H1 (cell line): ENCODE measurements at regions of chr22 and their contacts with region 1.

Region 1: GRCh38 chr22:45263463-45264269 is 21.1 kb upstream of the UPK3A start:
- DNase-seq: peak in 1 of 2 experiments; percentile 76
- H3K4me3 ChIP-seq: no peak overlapping the region
- H3K27ac ChIP-seq: no peak overlapping the region
- H3K4me1 ChIP-seq: peaks cover 0 to 4% (median under 1%) of the 10 kb centered on the region in 4 experiments; a peak in 2 of 7 replicates
- H3K27me3 ChIP-seq: peaks cover 0 to 12% (median 7%) of the 10 kb centered on the region in 4 experiments; a peak in 4 of 7 replicates
- CTCF ChIP-seq: peak; percentile 76 to 95 (median 87)
- EP300 ChIP-seq: no peak
- POLR2A ChIP-seq: no peak
- RAD21 ChIP-seq: peak; percentile 77 to 81

Region 2: GRCh38 chr22:45192701-45193187 is 70.9 kb before region 1 on chr22:
- CTCF ChIA-PET with region 1: interaction called, 10 read pairs
- POLR2A ChIA-PET with region 1: no interaction called
- DNase-seq: peak in 1 of 2 experiments; percentile 62
- H3K4me3 ChIP-seq: no peak overlapping the region
- H3K27ac ChIP-seq: no peak overlapping the region
- H3K4me1 ChIP-seq: peaks cover 4 to 10% (median 7%) of the 10 kb centered on the region in 4 experiments; a peak in 6 of 7 replicates
- H3K27me3 ChIP-seq: no peaks in the 10 kb centered on the region
- CTCF ChIP-seq: peak; percentile 41 to 51 (median 42)
- EP300 ChIP-seq: no peak
- POLR2A ChIP-seq: no peak
- RAD21 ChIP-seq: peak; percentile 54 to 70

Region 3: GRCh38 chr22:45251825-45252224 is 11.8 kb before region 1 on chr22:
- CTCF ChIA-PET with region 1: interaction called, 10 read pairs
- POLR2A ChIA-PET with region 1: no interaction called
- DNase-seq: no peak
- H3K4me3 ChIP-seq: no peak overlapping the region
- H3K27ac ChIP-seq: no peak overlapping the region
- H3K4me1 ChIP-seq: no peaks in the 10 kb centered on the region
- H3K27me3 ChIP-seq: no peaks in the 10 kb centered on the region
- CTCF ChIP-seq: no peak
- EP300 ChIP-seq: no peak
- POLR2A ChIP-seq: no peak
- RAD21 ChIP-seq: no peak; a peak in 1 of 4 replicates